ENCODE measurements at regions of chr11 and their contacts with region 1.

Region 1: GRCh38 chr11:65013692-65014145 is 241 bp upstream of the ARL2 start:
- DNase-seq: peak; percentile 79 to 88
- ATAC-seq: peak; percentile 95
- H3K4me3 ChIP-seq: peak overlapping the region; percentile 78 to 99 (median 87)
- H3K27ac ChIP-seq: peak overlapping the region; percentile 95 to 100 (median 97)
- H3K4me1 ChIP-seq: peaks cover 14 to 18% of the 10 kb centered on the region in 2 donors
- H3K27me3 ChIP-seq: no peaks in the 10 kb centered on the region
- CTCF ChIP-seq: peak in 4 of 5 experiments; percentile 74 to 89 (median 82)
- POLR2A ChIP-seq: peak; percentile 43 to 57

Region 2: DNA sequence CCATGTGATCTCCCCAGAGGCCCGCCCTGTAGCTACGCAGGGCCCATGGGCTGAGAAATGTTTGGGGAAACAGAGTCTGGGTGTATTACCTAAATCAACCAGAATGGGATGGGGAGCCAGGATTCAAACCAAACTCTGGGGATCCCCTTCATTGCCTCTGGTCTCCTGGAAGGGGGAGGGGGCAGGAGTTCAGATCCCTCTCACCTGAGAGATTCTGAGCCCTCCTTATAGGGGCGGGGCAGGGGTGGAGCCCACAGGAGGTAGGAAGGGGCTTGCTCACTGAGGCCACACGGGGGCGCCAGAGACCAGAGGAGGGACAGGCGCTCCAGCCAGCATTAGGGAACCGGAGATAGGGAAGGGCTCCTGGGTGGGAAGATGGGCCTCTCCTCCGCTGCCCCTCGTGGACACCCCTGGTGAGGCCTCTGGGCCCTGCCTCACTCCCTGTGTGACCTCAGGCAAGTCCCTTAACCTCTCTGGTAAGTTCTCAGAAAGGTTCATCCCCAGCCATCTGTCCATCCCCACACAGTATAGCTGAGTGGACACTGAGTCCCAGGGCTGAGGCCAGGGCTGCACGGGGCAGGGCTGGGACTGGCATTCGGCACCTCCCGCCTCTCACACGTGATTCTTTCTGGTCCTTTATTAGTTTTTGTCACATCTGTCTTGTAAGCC is 166.6 kb before region 1 on chr11:
- in situ Hi-C with region 1: no loop called
- intact Hi-C with region 1: loop called (anchors 5 kb)
- DNase-seq: peak; percentile 78 to 86
- ATAC-seq: peak; percentile 90 to 95
- H3K4me3 ChIP-seq: no peak overlapping the region
- H3K27ac ChIP-seq: peak overlapping the region in 2 of 4 donors; percentile 22 to 34
- H3K4me1 ChIP-seq: peaks cover 33 to 36% of the 10 kb centered on the region in 2 donors
- H3K27me3 ChIP-seq: peaks cover 0 to 3% (median 0%) of the 10 kb centered on the region in 3 donors
- CTCF ChIP-seq: peak; percentile 95 to 99 (median 99)
- POLR2A ChIP-seq: no peak

Region 3: DNA sequence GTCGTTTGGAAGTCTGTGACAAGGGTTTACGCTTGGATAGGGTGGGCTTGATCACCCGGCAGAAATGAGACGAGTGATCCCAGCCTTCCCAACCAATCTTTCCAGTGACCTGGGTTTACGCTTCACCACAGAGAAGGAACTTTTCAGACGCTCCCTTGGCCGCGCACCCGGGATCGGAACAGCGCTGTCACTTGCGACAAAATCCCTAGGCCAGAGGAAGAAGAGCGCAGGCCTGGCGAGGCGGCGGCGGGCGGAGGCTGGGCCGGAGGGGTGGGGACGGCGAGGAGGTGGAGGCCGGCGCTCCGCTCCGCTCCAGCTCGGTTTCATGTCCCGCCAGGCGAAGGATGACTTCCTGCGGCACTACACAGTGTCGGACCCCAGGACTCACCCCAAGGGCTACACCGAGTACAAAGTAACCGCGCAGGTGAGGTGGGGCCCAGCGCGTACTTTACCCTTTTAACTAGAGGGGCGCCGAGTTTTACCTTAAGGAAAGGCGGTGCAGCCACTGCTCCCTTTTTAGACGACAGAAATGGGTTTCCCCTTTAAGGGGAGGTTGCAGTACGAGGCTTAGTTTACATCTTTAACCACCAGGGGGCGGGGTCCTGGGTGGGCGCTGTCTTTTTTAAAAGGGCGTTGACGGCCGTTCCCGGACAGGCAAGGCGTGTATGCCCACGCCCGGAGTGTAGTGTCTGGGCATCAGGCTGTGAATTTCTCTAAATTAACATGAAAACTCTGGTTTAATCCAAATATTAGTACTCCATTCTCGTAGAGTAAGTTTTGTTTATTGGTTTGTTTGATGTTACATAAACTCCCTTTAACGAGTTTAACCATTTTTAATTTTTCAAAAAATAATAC is 13.7 kb after region 1 on chr11 and contains the start of gene SNX15:
- in situ Hi-C with region 1: no loop called
- intact Hi-C with region 1: loop called (anchors 1 kb)
- DNase-seq: peak; percentile 92 to 93
- ATAC-seq: peak; percentile 99 to 100
- H3K4me3 ChIP-seq: peak within 1 kb of the TSS; percentile 61 to 73 (median 70)
- H3K27ac ChIP-seq: peak within 1 kb of the TSS; percentile 83 to 94 (median 89)
- H3K4me1 ChIP-seq: peaks cover 12 to 13% of the 10 kb centered on the region in 2 donors
- H3K27me3 ChIP-seq: no peaks in the 10 kb centered on the region
- CTCF ChIP-seq: peak in 4 of 5 experiments; percentile 77 to 88 (median 83)
- POLR2A ChIP-seq: peak; percentile 71 to 82
- total RNA-seq, gene SNX15: 16.9 to 33.3 (median 25.9) TPM

Region 4: DNA sequence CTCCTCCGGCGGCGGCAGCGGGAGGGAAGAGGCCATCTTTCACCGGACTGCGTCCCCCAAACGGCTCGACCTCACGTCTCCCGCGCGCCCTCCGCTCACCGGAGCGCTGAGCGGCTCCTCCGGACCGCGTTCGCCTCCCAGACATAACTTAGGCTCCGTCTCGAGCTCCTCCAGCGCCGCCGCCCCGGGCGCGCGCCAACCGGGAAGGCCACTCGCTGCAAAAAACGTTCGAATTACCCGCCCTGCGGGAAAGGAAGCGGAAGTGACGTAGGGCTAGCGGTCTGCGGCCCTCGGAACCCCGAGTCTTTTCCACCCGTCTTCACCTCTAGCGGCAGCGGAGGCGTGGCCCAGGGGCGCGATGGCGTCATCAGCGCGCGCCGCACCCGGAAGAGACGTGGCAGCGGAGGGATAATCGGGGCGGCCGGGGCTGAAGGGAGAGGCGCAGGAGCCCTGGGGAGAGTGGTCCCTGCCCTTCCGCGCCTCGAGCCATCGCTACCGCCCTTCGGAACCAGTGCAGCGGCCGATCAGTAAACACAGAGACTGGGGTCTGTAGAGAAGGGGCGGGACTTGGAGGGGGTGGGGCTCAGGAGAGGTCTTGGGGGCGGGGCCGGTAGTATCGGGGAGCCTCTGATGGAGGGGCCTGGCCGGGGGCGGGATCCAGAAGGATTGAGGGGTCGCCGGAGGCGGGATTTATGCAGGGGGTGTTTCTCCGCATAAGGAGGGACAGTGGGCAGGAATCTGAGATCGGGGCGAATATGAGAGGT is 70.3 kb after region 1 on chr11 and contains the starts of genes CDCA5 and ZFPL1:
- in situ Hi-C with region 1: no loop called
- intact Hi-C with region 1: loop called (anchors 1 kb)
- DNase-seq: peak; percentile 90 to 93
- ATAC-seq: peak; percentile 98 to 99
- H3K4me3 ChIP-seq: peak within 1 kb of the TSS; percentile 71 to 95 (median 81)
- H3K27ac ChIP-seq: peak within 1 kb of the TSS; percentile 90 to 98 (median 91)
- H3K4me1 ChIP-seq: peaks cover 12 to 18% of the 10 kb centered on the region in 2 donors
- H3K27me3 ChIP-seq: no peaks in the 10 kb centered on the region
- CTCF ChIP-seq: peak in 1 of 5 experiments; percentile 4
- POLR2A ChIP-seq: peak; percentile 12 to 52
- total RNA-seq, gene CDCA5: 0.36 to 1.3 (median 1.00) TPM in 3 of 4 donors, not detected in the other
- total RNA-seq, gene ZFPL1: 35.7 to 42.0 (median 40.6) TPM

Region 5: DNA sequence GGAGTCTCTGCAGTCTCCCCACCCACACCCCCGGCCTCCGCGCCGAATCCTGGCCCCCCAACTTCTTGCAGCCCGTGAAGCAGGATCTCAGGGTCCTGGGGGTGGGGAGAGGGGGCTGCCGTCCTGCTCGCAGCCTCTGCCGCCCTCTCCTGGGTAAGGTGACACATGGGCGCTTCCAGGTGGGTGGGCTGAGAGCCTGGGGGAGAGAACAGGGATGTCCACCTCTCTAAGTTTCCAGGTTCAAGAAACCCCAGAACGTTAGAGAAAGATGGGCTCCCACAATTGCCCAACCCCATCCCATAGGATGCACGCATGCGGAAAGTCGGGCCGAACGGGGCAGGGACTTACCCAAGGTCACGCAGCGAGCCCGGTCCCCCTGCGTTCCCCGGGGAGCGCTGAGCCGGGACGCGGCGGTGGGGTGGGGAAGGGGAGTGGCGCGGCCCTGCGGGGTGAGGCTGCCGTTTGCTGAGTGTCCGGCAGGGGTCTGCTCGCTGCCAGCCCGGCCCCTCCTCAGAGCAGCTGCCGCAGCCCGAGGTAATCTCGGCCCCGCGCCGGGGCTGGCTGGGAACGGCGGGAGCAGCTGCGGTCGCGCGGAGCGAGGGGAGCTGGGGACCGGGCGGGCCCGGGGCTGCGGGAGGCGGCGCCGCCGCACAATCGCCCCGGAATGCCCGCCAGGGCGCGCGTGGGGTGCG is 167.3 kb after region 1 on chr11:
- in situ Hi-C with region 1: no loop called
- intact Hi-C with region 1: loop called (anchors 5 kb)
- DNase-seq: peak; percentile 27 to 66
- ATAC-seq: peak; percentile 54 to 55
- H3K4me3 ChIP-seq: peak overlapping the region; percentile 85 to 99 (median 92)
- H3K27ac ChIP-seq: peak overlapping the region; percentile 93 to 99 (median 98)
- H3K4me1 ChIP-seq: peaks cover 18 to 25% of the 10 kb centered on the region in 2 donors
- H3K27me3 ChIP-seq: no peaks in the 10 kb centered on the region
- CTCF ChIP-seq: peak; percentile 52 to 75 (median 73)
- POLR2A ChIP-seq: peak; percentile 76 to 80

Measured in gastrocnemius medialis (tissue), 4 donors.